ENCODE measurements at regions of chr17 and their contacts with region 1.

Region 1: GRCh38 chr17:42129109-42129837 is 6.7 kb downstream of the HSPB9 start:
- DNase-seq: peak in 6 of 7 donors; percentile 60 to 82 (median 71)
- H3K4me3 ChIP-seq: no peak overlapping the region
- H3K27ac ChIP-seq: peak overlapping the region; percentile 63 to 93 (median 68)
- H3K4me1 ChIP-seq: peaks cover 43 to 55% of the 10 kb centered on the region in 2 donors
- H3K27me3 ChIP-seq: no peaks in the 10 kb centered on the region
- CTCF ChIP-seq: peak in 2 of 6 experiments; percentile 6 to 26
- POLR2A ChIP-seq: no peak

Region 2: DNA sequence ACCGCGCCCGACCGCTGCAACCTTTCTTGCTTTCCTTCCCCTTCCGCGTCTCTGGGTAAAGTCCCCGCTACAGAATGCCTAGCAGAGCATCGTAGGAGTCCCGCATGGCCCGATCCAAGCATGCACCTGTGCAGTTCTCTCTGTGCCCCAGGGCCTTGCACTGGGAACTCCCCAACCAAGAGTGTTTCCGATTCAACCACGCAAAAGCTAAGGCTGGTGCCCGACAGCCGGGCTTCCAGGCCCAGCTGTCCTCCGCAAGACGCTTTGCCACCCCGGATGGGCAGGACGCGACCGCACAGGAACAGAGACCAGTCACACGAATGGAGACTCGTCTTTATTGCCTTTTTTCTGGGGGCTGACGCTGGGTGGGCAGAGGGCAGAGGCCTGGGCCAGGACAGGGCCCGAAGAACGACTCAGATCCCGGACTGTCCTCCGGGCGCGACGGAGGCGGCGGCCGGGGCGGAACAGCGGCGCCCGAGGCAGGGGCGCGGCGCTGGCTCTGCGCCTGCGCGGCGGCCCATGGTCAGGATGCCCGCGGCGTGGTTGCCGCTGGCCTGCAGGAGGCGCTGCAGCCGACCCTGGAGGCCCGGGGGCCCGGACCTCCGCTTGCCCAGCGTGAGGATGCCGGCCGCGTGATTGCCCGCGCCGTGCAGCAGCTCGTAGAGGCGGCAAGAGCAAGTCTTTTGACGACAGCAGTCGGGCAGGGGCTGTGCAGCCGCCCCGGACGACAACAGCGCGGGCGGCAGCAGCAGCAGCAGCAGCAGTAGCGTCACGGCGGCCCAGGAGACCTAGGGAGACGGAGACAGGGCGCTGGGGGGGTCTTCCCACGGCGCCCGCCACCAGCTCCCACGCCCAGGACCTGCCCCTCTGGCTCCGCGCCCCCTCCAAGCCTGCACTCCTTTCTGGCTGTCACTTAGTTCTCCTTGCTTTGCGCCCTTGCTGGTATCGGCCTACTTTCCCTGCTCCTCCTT is 54.8 kb after region 1 on chr17:
- intact Hi-C with region 1: loop called in 1 of 2 experiments (anchors 5 kb)
- DNase-seq: peak; percentile 74 to 86 (median 80)
- H3K4me3 ChIP-seq: peak overlapping the region in 2 of 4 donors; percentile 25 to 66
- H3K27ac ChIP-seq: peak overlapping the region in 4 of 5 donors; percentile 29 to 77 (median 53)
- H3K4me1 ChIP-seq: peaks cover 15 to 37% of the 10 kb centered on the region in 2 donors
- H3K27me3 ChIP-seq: no peaks in the 10 kb centered on the region
- CTCF ChIP-seq: peak; percentile 32 to 93 (median 67)
- POLR2A ChIP-seq: peak in 1 of 2 donors; percentile 41